PC-3 (cell line): ENCODE measurements at regions of chr19 and their contacts with region 1.

Region 1: DNA sequence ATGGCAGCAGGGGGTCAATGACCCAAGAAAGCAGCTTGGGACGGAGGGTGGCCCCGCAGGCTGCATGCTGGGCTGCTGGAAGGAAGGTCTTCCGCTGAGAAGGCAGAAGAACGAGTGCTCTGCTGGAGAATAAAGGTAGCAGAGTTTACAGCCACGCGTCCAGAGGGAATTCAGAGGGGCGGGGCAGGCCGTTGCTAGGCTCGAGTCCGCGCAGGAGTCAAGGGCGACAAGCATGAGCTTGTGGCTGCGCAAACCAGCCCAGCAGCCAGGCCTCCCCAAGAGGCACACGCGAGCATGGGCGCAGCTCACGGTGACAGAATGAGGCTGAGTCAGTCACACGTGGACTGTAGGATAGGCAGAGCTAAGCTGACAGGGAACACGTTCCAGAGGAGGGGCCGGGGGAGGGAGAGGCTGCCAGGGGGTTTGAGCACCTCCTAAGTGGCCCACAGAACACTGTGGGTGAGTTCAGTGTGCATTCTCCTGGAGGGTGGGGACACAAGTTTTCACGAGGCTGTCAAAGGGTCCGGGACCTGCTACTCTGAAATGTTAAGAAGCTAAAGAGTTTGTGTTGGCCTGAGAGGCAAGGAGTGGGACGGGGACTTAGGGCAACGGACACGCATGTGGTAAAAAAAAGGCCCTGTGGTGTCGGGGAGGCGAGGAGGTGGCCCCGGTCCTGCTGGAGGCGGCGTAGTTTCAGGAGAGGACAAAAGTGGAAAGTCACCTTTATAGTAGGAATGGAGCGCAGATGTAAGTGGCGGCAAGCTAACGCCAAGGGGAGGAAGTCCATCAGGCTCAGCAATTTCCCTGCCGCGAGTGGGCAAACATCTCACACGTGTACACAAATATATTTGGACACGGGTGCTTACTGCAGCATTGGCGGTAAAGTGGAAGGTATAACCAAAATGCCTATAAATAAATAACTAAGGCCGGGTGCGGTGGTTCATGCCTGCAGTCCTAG is 17.7 kb downstream of the RFX2 start:
- DNase-seq: peak; percentile 90
- ATAC-seq: peak; percentile 82
- H3K4me3 ChIP-seq: peak overlapping the region; percentile 38; the same call in 1 of the 2 replicates
- H3K27ac ChIP-seq: peak overlapping the region; percentile 19
- H3K4me1 ChIP-seq: peaks cover 40% of the 10 kb centered on the region
- H3K27me3 ChIP-seq: no peaks in the 10 kb centered on the region
- CTCF ChIP-seq: no peak

Region 2: GRCh38 chr19:5607318-5608270 is 485.0 kb before region 1 on chr19:
- CTCF ChIA-PET with region 1: no interaction called
- POLR2A ChIA-PET with region 1: interaction called, 13 read pairs
- intact Hi-C with region 1: no loop called
- DNase-seq: peak; percentile 56
- ATAC-seq: peak; percentile 76
- H3K4me3 ChIP-seq: no peak overlapping the region
- H3K27ac ChIP-seq: peak overlapping the region; percentile 85
- H3K4me1 ChIP-seq: peaks cover 27% of the 10 kb centered on the region
- H3K27me3 ChIP-seq: no peaks in the 10 kb centered on the region
- CTCF ChIP-seq: no peak

Region 3: DNA sequence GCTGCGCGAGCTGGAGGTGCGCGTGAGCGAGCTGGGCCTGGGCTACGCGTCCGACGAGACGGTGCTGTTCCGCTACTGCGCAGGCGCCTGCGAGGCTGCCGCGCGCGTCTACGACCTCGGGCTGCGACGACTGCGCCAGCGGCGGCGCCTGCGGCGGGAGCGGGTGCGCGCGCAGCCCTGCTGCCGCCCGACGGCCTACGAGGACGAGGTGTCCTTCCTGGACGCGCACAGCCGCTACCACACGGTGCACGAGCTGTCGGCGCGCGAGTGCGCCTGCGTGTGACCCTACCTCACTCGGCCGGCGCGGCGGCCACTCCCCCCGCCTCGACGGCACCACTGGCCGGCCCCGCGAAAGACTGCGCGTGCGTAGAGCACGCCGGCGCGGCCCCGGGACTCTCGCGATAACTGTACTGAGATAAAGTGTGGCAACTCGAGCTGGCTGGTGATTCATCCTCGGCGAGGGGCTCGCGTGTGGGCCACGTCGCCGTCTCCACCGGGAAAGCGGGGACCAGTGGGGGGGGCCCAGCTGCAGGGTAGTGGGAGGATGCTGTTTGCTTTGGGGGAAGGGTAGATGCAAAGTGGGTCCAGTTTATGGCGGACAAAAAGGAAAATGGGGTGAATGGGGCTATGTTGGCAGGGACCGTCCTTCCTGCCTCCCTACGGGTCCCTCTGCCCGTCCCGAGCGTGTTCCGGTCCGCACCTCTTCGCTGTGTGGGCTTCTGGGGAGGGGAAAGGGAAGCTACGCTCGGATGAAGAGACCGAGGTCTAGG is 264.5 kb before region 1 on chr19:
- CTCF ChIA-PET with region 1: no interaction called
- POLR2A ChIA-PET with region 1: no interaction called
- intact Hi-C with region 1: no loop called
- DNase-seq: peak; percentile 88
- ATAC-seq: peak; percentile 64
- H3K4me3 ChIP-seq: peak overlapping the region; percentile 59
- H3K27ac ChIP-seq: peak overlapping the region; percentile 35; the same call in 1 of the 2 replicates
- H3K4me1 ChIP-seq: peaks cover 14% of the 10 kb centered on the region; the same call in 1 of the 2 replicates
- H3K27me3 ChIP-seq: no peaks in the 10 kb centered on the region
- CTCF ChIP-seq: no peak

Region 4: GRCh38 chr19:6066661-6067646 is 25.7 kb before region 1 on chr19:
- CTCF ChIA-PET with region 1: no interaction called
- POLR2A ChIA-PET with region 1: interaction called, 4 read pairs
- intact Hi-C with region 1: loop called (anchors 1 kb)
- DNase-seq: peak; percentile 92
- ATAC-seq: peak; percentile 48
- H3K4me3 ChIP-seq: peak overlapping the region; percentile 42
- H3K27ac ChIP-seq: peak overlapping the region; percentile 86
- H3K4me1 ChIP-seq: peaks cover 42% of the 10 kb centered on the region
- H3K27me3 ChIP-seq: no peaks in the 10 kb centered on the region
- CTCF ChIP-seq: no peak

Region 5: DNA sequence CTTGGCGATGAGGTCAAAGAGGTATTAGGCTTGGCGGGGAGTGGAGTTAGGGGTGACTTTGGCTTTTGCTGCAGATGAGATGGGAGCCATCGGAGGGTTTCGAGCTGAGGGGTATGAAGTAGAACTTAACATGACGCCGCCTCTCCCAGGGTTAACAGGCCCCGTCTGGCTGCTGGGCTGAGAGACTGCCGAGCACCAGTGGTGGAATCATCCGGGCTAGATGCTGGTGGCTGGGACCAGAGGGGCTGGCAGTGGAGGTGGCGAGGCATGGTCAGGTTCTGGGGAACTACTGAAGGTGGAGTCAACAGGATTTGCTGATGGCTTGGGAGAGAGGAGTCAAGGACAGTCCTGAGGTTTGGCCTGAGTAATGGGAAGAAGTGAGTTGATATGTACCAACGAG is 12.8 kb after region 1 on chr19:
- CTCF ChIA-PET with region 1: interaction called, 4 read pairs
- POLR2A ChIA-PET with region 1: interaction called, 14 read pairs
- intact Hi-C with region 1: loop called (anchors 2 kb)
- DNase-seq: no peak
- ATAC-seq: no peak
- H3K4me3 ChIP-seq: no peak overlapping the region
- H3K27ac ChIP-seq: no peak overlapping the region
- H3K4me1 ChIP-seq: peaks cover 25% of the 10 kb centered on the region
- H3K27me3 ChIP-seq: no peaks in the 10 kb centered on the region
- CTCF ChIP-seq: no peak

Region 6: DNA sequence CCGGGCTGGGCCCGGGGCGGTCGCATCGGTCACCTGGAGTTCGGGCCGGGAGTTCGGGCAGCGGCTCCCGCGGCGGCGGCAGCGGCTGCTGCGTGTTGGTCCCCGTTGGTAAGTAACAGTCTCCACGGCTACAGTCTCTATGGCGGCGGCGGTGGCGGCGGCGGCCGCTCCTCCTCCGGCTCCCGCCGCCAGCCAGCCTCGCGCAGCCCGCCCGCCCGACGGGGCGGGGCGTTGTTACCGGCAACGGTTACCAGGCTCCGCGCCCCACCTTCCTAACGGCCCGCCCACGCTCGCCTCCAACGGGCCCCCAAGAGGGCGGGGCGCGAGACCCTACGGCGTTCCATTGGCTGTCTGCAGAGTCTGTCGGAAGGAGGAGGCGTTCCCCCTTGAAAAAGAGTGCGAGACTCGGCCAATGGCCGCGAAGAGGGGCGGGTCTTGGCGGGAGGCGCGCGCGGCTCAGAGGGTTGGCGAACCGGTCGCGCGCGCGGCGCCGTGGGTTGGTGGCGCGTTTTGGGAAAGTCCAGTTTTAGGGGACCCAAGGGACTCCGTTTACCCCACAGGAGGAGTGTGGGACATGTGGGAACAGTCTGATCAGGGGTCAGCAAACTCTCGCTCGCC is 17.9 kb after region 1 on chr19 and contains the start of gene RFX2:
- CTCF ChIA-PET with region 1: interaction called, 5 read pairs
- POLR2A ChIA-PET with region 1: interaction called, 14 read pairs
- intact Hi-C with region 1: loop called (anchors 2 kb)
- DNase-seq: peak; percentile 100
- ATAC-seq: peak; percentile 98
- H3K4me3 ChIP-seq: peak within 1 kb of the TSS; percentile 70
- H3K27ac ChIP-seq: no peak within 1 kb of the TSS
- H3K4me1 ChIP-seq: peaks cover 12% of the 10 kb centered on the region
- H3K27me3 ChIP-seq: no peaks in the 10 kb centered on the region
- CTCF ChIP-seq: no peak
- total RNA-seq, gene RFX2: 10.5 and 11.3 TPM in 2 replicates

Region 7: DNA sequence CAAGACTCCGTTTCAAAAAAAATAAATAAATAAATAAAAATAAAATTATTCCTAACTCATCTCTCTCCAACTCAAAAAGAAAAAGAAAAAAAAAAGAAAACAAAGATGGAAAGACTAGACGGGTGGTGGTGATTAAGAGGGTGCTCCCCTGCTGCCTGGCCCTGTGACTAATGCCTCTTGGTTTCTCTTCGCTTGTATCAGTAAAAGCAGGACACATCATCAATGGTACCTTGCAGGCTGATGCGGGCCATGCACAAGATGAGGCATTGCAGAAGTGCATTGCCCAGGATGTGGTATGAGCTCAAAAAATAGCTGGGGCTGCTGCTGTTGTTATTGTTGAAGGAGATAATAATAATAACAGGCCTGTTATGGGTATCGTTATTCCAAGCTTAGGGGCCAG is 226.2 kb after region 1 on chr19:
- CTCF ChIA-PET with region 1: no interaction called
- POLR2A ChIA-PET with region 1: no interaction called
- intact Hi-C with region 1: no loop called
- DNase-seq: peak; percentile 27
- ATAC-seq: peak; percentile 38; the same call in 1 of the 2 replicates
- H3K4me3 ChIP-seq: no peak overlapping the region
- H3K27ac ChIP-seq: no peak overlapping the region
- H3K4me1 ChIP-seq: no peaks in the 10 kb centered on the region
- H3K27me3 ChIP-seq: peaks cover 10% of the 10 kb centered on the region; the same call in 1 of the 2 replicates
- CTCF ChIP-seq: no peak

Region 8: DNA sequence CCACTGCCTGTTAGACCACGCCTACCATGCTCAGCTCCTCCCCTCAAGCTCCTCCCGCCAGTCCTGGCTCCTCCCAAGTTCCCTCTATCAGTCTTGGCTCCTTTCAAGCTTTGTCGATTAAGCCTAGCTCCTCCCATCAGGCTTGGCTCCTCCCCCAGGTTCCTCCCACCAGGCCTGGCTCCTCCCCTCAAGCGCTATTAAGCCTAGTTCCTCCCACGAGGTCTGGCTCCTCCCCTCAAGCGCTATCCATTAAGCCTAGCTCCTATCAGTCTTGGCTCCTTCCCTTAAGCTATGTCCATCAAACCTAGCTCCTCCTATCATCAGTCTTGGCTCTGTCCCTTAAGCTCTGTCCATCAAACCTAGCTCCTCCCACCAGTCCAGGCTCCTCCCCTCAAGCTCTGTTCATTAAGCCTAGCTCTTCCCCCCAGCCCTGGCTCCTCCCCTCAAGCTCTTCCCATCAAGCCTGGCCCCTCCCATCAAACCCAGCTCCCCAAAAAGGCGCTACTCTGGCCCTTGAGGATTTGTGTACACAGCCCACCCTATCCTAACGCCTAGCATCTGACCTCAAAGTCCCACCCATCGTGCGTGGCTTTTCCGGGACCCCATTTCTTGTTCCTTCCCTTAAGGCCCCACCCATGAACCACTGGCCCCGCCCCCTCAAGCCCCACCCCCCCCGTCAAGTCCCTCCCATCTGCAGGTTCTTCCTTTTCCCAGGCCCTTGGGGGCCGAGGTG is 1513.0 kb after region 1 on chr19:
- CTCF ChIA-PET with region 1: no interaction called
- POLR2A ChIA-PET with region 1: interaction called, 11 read pairs
- intact Hi-C with region 1: no loop called
- DNase-seq: peak; percentile 71
- ATAC-seq: peak; percentile 83
- H3K4me3 ChIP-seq: no peak overlapping the region
- H3K27ac ChIP-seq: no peak overlapping the region
- H3K4me1 ChIP-seq: no peaks in the 10 kb centered on the region
- H3K27me3 ChIP-seq: no peaks in the 10 kb centered on the region
- CTCF ChIP-seq: no peak